Activated B cell treated with CpG ODN at 0.5 μM for 24 hours (primary cell): ENCODE measurements at regions of chr11 and their contacts with region 1.

Region 1: GRCh38 chr11:41461057-41461681 is 1.7 kb upstream of the LRRC4C start:
- DNase-seq: no peak
- ATAC-seq: no peak
- H3K4me3 Mint-ChIP-seq: no peak overlapping the region
- H3K27ac Mint-ChIP-seq: no peak overlapping the region
- H3K4me1 Mint-ChIP-seq: no peaks in the 10 kb centered on the region
- H3K27me3 Mint-ChIP-seq: peaks cover 5% of the 10 kb centered on the region
- CTCF ChIP-seq: peak; percentile 91

Region 2: DNA sequence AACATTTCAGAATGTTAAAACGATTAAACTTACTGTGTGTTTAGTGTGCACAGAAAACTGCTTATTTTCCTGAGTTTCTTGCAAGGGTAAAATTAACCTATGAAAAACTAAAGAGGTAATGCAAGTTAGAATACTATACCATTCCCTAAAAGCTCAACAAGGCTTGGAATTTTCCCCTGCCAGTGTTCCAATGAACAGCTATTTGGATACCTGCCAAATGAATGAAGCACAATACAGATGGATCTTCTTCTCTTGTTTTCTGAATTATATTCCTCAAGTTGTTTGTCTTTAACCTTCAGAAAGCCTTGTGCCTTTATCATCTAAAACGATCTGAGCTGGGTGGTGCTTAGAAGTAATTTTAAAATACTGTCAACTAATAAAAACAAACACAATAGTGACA is 206.2 kb before region 1 on chr11:
- CTCF ChIA-PET with region 1: no interaction called
- POLR2A ChIA-PET with region 1: no interaction called
- intact Hi-C with region 1: no loop called
- DNase-seq: no peak
- ATAC-seq: no peak
- H3K4me3 Mint-ChIP-seq: no peak overlapping the region
- H3K27ac Mint-ChIP-seq: no peak overlapping the region
- H3K4me1 Mint-ChIP-seq: no peaks in the 10 kb centered on the region
- H3K27me3 Mint-ChIP-seq: no peaks in the 10 kb centered on the region
- CTCF ChIP-seq: no peak

Region 3: DNA sequence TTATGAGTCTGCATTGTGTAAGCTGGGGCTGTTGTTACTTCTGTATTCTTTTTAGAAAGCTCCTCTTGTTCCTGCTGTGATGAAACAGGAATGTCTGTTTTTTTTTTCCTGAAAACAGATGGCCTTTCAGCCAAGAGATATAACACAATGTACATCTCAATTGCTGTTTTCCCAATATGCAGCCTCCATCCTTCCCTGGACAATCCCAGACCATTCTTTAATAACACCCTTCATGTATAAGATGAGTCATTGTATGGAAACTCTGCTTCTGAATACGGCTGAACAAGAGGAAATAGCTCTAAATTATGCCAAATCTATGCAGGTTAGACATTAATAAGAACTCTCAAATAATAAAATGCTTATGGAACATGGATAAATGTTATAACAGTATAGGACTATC is 58.5 kb after region 1 on chr11:
- CTCF ChIA-PET with region 1: no interaction called
- POLR2A ChIA-PET with region 1: no interaction called
- intact Hi-C with region 1: no loop called
- DNase-seq: no peak
- ATAC-seq: no peak
- H3K4me3 Mint-ChIP-seq: no peak overlapping the region
- H3K27ac Mint-ChIP-seq: no peak overlapping the region
- H3K4me1 Mint-ChIP-seq: no peaks in the 10 kb centered on the region
- H3K27me3 Mint-ChIP-seq: no peaks in the 10 kb centered on the region
- CTCF ChIP-seq: no peak

Region 4: DNA sequence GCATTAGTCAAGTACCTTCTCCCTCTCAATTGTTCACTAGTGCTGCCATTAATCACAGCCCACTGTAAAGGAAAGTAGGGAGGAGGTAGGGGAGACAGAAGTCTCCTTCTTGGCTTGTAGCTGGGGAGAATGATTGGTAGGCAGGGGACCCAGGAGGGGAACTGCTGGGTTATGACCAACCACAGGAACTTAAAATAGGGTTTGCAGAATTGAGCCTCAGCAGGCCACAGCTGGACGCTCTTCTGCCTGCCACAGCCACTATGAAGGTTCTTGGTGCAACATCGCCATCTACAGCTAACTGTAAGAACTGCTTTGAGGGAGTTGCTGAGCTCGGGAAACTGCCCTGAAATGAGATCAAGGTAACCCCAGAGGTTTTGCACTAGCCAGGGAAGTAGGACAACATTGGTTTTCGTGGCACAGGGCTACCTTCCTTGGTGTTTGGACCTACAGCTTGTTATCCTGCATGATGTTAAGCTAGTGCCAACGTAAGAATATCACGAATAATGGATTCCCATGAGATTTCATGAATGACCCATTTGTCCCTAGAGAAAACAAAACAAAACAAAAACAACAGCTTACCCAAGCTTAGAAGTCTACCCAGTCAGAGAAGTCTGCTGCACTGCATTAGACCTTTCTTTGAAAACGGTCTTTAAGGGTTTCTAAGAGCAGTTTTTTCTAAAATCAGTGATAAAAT is 1063.5 kb after region 1 on chr11:
- CTCF ChIA-PET with region 1: no interaction called
- POLR2A ChIA-PET with region 1: no interaction called
- intact Hi-C with region 1: loop called (anchors 2 kb)
- DNase-seq: no peak
- ATAC-seq: no peak
- H3K4me3 Mint-ChIP-seq: no peak overlapping the region
- H3K27ac Mint-ChIP-seq: no peak overlapping the region
- H3K4me1 Mint-ChIP-seq: no peaks in the 10 kb centered on the region
- H3K27me3 Mint-ChIP-seq: no peaks in the 10 kb centered on the region
- CTCF ChIP-seq: no peak

Region 5: DNA sequence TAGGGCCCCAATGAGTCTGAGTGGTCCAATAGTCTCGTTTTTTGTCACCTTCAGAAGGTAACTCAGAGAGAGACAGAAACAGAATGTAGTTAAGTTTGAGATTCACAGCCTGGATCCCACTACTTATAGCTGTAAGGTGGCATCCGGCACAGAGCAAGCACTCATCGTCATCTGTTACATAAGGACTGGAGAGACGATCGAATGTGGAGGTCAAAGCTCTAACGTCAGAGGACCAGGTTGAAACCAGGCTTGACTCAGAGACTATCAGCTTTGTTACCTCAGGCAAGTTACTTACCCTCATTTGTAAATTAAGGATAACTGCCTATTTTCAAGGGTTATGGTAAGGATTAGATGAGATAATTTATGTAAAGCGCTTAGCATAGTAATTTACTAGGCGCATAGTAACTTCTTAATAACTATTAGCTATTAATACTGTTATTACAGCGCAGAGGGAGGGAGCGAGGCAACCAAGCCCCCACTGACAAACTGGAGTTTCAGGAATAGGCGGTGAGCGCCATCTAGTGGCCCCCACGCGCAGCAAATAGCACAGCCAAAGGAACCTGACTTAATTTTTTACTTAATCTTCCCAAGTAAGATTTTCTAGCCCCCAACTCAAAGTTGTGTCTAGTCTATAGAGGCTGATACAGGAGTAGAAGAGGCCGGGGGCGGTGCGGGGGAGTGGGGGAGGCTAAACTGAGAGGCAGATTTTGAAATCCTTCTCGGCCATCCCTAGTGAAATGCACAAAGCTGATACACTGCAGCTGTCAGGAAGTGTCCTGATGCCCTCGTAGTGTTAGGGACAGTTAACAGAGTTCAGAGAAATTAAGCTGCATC is 1821.7 kb after region 1 on chr11:
- CTCF ChIA-PET with region 1: interaction called, 13 read pairs
- POLR2A ChIA-PET with region 1: no interaction called
- intact Hi-C with region 1: no loop called
- DNase-seq: peak; percentile 21
- ATAC-seq: no peak
- H3K4me3 Mint-ChIP-seq: no peak overlapping the region
- H3K27ac Mint-ChIP-seq: no peak overlapping the region
- H3K4me1 Mint-ChIP-seq: no peaks in the 10 kb centered on the region
- H3K27me3 Mint-ChIP-seq: peaks cover 10% of the 10 kb centered on the region
- CTCF ChIP-seq: no peak